Ovary (tissue), 10 donors: ENCODE measurements at regions of chr9 and their contacts with region 1.

Region 1: DNA sequence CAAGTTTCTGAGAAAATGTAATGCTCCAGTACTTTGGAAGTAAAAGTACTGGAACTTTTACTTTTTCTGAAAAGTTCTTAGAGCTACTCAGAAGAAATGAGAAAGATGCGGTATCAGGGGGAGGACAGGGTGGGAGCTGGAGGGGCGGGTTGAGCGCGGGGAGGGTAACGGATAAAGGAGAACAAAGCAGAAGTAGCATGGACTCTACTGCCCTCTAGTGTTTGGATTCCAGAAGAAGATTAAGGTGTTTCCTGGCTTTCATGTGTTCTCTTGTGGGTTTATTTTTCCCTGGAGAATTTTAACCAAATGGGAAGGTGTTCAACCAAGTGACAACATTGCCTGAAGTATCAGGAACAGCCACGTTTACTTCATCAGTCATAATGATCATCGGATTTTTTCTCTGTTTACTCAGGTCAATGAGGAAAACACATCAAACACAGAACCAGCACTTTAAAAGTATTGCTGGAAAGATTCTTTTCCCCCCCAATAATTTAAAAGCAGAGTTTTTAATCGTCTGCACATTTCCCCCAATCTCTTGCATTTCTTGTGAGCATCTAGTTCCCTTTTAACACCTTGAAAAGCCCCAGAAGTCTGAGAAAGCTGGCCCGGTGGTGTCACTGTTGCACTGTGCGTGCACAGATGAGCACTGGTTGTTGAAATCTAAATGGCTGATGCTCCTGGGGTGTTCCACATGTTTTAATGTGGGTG is 190.6 kb downstream of the MPDZ start:
- DNase-seq: peak in 2 of 5 donors; percentile 15 to 30
- H3K4me3 ChIP-seq: no peak overlapping the region
- H3K27ac ChIP-seq: no peak overlapping the region
- H3K4me1 ChIP-seq: no peaks in the 10 kb centered on the region
- H3K27me3 ChIP-seq: no peaks in the 10 kb centered on the region
- CTCF ChIP-seq: peak; percentile 20 to 45 (median 20)
- EP300 ChIP-seq: no peak
- POLR2A ChIP-seq: no peak

Region 2: DNA sequence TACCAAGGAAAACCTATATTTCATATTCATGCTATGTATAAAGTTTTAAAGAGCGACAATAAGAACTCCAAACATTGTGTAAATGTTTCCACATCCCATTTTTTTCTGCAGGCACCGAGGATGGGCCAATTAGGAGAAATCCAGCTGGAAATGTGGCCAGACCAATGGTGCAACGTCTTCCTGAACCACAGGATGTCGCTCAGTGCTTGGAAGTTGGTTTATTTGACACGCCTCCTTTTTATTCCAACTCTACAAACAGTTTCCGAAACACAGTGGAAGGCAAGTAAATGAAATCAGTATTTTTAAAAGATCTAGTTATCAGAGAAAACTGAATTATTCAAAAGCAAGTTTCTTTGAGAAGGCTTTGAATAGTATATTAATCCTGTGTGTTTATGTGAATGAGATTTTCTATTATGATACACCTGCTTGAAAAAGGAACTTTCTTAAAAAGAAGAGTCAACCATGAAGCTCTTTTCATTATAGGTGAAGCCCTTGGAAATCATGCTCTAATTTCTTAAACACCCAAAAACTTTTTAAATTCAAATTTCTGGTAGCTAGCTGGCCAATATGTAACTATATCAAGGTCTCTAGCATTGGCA is 386.6 kb before region 1 on chr9:
- intact Hi-C with region 1: loop called in 1 of 4 experiments (anchors 5 kb)
- DNase-seq: peak in 1 of 5 donors; percentile 43
- H3K4me3 ChIP-seq: no peak overlapping the region
- H3K27ac ChIP-seq: no peak overlapping the region
- H3K4me1 ChIP-seq: no peaks in the 10 kb centered on the region
- H3K27me3 ChIP-seq: no peaks in the 10 kb centered on the region
- CTCF ChIP-seq: no peak
- EP300 ChIP-seq: no peak
- POLR2A ChIP-seq: no peak

Region 3: GRCh38 chr9:12723409-12724028 is 365.4 kb before region 1 on chr9:
- intact Hi-C with region 1: loop called in 1 of 4 experiments (anchors 10 kb)
- DNase-seq: no peak
- H3K4me3 ChIP-seq: no peak overlapping the region
- H3K27ac ChIP-seq: no peak overlapping the region
- H3K4me1 ChIP-seq: no peaks in the 10 kb centered on the region
- H3K27me3 ChIP-seq: no peaks in the 10 kb centered on the region
- CTCF ChIP-seq: peak in 1 of 3 donors; percentile 32
- EP300 ChIP-seq: no peak
- POLR2A ChIP-seq: no peak

Region 4: DNA sequence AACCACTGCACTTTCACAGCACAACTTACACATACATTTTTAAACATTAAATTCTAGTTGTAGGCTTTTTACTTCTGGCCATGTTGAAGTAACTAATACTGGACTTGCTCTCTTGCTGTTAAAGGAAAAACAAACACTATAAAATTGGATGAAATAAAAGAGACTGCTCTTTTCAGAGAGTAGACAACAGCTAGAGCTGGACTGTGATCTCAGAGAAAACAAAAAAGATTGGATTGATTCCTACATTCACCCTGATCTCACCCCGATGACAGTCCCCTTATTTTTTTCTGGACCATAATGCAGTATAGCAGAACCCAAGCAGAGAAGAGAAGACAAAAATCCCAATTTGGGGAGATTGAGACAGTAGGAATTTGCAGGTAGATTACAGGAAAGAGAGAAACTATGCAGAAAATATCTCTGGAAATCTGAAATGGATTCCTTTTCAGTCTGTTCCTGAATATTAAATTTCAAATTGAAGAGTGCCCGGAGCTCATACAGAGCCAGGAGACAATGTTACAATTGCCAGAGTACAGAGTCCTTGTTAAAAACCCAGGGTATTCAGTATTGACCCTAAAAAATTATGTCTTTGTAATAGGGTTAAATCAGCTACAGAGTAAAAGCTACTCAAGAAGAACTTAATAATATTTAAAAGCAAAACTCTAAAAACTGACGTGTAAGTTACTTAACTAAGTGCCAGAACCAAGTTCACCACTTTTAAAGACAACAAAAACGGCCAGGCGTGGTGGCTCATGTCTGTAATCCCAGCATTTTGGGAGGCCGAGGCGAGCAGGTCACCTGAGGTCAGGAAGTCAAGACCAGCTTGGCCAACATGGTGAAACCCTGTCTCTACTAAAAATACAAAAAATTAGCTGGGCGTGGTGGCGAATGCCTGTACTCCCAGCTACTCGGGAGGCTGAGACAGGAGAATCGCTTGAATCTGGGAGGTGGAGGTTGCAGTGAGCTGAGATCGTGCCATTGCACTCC is 18.0 kb before region 1 on chr9:
- intact Hi-C with region 1: no loop called
- DNase-seq: no peak
- H3K4me3 ChIP-seq: no peak overlapping the region
- H3K27ac ChIP-seq: no peak overlapping the region
- H3K4me1 ChIP-seq: no peaks in the 10 kb centered on the region
- H3K27me3 ChIP-seq: no peaks in the 10 kb centered on the region
- CTCF ChIP-seq: no peak
- EP300 ChIP-seq: no peak
- POLR2A ChIP-seq: no peak

Region 5: GRCh38 chr9:13778631-13779030 is 689.8 kb after region 1 on chr9:
- intact Hi-C with region 1: loop called in 1 of 4 experiments (anchors 5 kb)
- DNase-seq: no peak
- H3K4me3 ChIP-seq: no peak overlapping the region
- H3K27ac ChIP-seq: no peak overlapping the region
- H3K4me1 ChIP-seq: no peaks in the 10 kb centered on the region
- H3K27me3 ChIP-seq: no peaks in the 10 kb centered on the region
- CTCF ChIP-seq: no peak
- EP300 ChIP-seq: no peak
- POLR2A ChIP-seq: no peak